ENCODE measurements at regions of chr4 and their contacts with region 1.

Region 1: GRCh38 chr4:88033309-88033708 is 25.9 kb downstream of the PKD2 start:
- DNase-seq: peak; percentile 59

Region 2: GRCh38 chr4:88204882-88205281 is 171.6 kb after region 1 on chr4:
- in situ Hi-C with region 1: loop called (anchors 10 kb)
- DNase-seq: peak; percentile 13

Region 3: DNA sequence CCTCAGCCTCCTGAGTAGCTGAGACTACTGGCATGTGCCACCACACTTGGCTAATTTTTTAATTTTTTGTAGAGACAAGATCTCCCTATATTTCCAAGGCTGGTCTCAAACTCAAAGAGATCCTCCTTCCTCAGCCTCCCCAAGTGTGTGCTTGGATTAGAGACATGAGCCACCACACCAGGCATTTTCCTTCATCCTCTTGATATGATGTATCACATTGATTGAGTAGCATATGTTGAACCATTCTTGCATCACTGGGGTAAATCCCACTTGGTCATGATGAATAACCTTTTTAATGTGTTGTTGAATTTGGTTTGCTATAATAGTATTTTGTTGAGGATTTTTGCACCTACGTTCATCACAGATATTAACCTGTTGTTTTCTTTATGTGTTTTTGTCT is 275.3 kb after region 1 on chr4:
- in situ Hi-C with region 1: no loop called
- DNase-seq: no peak

Region 4: DNA sequence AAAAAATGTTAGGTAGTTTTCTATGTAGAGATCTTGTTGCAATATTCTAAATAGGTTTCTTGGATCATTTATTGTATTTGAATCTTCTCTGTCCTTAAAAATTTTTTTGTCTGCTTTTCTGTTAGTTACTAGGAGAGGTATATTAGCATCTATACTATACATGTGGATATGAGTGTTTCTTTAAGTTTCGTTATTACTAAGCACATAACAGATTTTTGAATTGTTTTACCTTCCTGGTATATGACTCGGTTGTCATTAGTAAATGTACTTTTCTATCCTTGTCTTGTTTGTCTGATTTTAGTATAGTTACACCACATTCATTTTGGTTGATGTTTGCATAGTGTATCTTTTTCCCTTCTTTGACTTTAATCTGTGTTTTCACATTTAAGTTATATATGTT is 470.0 kb after region 1 on chr4:
- in situ Hi-C with region 1: loop called (anchors 10 kb)
- DNase-seq: no peak

Region 5: DNA sequence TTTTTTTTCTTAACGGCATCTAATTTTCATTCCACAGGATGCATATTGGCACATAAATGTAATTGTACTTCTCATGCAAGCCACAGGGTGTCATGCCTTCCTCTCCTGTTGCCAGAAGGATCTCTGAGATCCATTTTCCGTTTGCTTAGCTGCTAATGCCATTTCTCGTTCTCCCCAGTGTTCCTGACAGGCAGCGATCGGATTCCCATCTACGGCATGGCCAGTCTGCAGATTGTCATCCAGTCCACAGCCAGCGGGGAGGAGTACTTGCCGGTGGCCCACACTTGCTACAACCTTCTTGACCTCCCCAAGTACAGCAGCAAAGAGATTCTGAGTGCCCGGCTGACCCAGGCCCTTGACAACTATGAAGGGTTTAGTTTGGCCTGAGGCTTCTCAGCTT is 673.3 kb after region 1 on chr4:
- in situ Hi-C with region 1: no loop called
- DNase-seq: peak; percentile 91